BJ (cell line): ENCODE measurements at regions of chr3 and their contacts with region 1.

Region 1: DNA sequence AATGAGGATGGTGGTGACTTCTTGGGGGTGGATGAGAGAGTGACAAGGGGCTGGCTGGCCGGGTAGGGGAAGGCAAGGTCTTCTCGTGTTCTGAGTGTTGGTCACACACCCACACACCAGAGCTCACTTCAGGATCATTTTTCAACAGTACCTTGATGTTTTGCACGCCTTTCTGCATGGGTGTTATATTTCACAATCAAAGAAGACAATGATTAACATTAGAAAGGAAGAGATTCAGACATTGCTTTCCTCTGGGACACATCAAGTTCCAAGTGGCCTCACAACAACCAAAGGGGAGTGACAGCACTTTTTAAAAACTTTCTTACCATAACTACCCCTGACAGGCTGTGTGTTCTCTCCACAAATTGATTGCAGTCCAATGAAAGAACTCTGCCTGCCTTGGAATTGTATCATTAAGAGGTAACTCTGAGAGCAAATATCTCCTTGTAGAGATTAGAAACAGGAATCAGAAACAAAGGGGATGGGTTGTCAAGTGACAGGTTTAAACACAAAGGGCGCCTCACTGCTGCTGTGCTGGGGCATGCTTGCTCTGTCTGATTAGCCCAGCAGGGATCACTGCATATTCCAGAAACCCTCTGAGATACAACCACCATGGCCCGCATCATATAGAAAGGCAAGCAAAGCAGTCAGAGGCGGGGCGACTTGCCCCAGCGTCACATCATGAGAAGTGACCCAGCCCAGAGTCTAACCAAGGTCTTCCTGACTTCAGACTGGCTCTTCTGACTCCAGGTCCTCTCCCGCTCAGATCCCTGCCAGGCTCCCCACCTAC is 230.8 kb downstream of the FEZF2 start:
- DNase-seq: no peak
- H3K4me3 ChIP-seq: no peak overlapping the region
- H3K27me3 ChIP-seq: no peaks in the 10 kb centered on the region
- CTCF ChIP-seq: no peak

Region 2: DNA sequence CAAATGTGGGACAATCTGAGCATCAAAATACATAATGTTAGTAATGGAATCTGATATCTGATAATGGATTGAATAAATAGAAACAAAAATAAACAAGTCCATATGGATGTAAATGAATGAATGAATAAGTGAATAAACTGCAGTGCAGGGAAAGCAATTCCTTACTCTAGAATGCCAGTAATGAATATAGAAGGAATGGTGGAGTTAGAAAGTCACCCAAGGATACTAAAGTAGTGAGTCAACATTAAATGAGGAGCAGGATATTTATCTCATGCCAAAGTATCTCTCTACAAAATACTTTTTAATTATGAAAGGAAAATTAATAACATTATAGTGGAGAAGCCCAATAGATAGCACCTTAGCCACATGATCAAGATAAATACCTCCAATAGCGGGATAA is 69.5 kb before region 1 on chr3:
- CTCF ChIA-PET with region 1: no interaction called
- POLR2A ChIA-PET with region 1: no interaction called
- DNase-seq: no peak
- H3K4me3 ChIP-seq: no peak overlapping the region
- H3K27me3 ChIP-seq: no peaks in the 10 kb centered on the region
- CTCF ChIP-seq: no peak

Region 3: DNA sequence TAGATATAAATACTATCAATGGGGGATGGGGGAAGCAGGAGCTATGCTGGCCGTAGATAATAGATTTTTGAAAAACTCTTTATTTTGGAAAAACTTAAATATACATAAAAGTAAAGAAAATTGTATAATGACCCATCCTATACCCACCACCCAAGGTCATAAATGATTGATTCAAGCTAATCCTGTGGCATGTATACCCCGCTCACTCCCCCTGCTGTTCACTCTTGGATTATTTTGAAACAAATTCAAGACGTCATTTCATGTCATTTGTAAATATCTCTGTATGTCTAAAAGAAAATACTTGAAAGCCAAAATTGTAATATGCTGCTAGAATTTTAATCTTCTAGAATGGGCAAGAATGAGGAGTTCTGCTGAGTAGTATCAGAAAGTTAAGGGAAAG is 10.9 kb before region 1 on chr3:
- CTCF ChIA-PET with region 1: interaction called, 15 read pairs
- POLR2A ChIA-PET with region 1: no interaction called
- DNase-seq: no peak
- H3K4me3 ChIP-seq: no peak overlapping the region
- H3K27me3 ChIP-seq: no peaks in the 10 kb centered on the region
- CTCF ChIP-seq: peak; percentile 44